Dorsolateral prefrontal cortex (tissue), 120 donors: ENCODE measurements at regions of chr17 and their contacts with region 1.

Region 1: DNA sequence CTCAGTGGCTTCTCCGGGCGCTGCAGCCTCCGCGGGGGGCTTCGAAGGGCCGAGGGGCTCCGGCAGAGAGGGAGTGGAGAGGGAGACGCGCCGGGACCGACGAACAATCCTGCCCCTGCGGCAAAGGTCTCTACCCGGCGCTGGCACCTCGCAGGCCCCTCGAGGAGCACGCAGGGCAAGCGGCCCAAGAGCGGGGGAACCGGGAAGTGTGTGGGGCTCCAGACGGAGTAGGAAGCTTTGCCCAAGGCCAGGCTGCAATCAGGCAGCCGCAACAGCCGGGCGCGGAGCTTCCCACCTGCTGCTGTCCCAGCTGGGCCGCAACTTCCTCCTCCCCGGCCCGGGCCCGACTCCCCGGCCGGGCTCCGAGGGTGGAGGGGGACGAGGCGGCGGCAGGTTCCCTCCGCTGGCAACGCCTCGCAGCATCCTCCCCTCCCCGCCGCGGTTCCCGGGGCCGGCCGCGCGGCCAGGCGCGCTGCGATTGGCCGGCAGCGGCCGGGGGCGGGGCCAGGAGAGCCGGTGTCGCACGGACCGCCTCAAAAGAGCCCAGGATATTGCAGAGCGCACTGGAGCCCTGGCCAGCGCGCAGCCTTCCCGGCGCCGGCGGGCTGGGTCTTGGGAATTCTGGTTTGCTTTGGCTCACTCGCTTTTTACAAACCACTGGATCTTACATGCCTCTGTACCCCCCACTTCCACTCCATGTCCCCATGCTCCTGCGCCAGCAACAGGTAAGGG is at the start of gene KCNJ2:
- DNase-seq: peak; percentile 43 to 94 (median 89)
- H3K4me3 ChIP-seq: peak within 1 kb of the TSS; percentile 59 to 96 (median 83)
- H3K27ac ChIP-seq: peak within 1 kb of the TSS; percentile 85 to 99 (median 95)
- H3K27me3 ChIP-seq: no peaks in the 10 kb centered on the region
- CTCF ChIP-seq: peak in 13 of 56 donors; percentile 1 to 34 (median 7)
- total RNA-seq, gene KCNJ2: 7.8 to 66.9 (median 21.8) TPM

Region 2: GRCh38 chr17:70622368-70623260 is 453.5 kb after region 1 on chr17:
- intact Hi-C with region 1: loop called (anchors 5 kb)
- DNase-seq: peak; percentile 14 to 87 (median 76)
- H3K4me3 ChIP-seq: peak overlapping the region in 36 of 59 donors; percentile 1 to 53 (median 24)
- H3K27ac ChIP-seq: peak overlapping the region; percentile 2 to 93 (median 84)
- H3K27me3 ChIP-seq: no peaks in the 10 kb centered on the region
- CTCF ChIP-seq: peak; percentile 43 to 95 (median 79)